CD4-positive, alpha-beta memory T cell (primary cell): ENCODE measurements at regions of chr7 and their contacts with region 1.

Region 1: GRCh38 chr7:46079421-46079820 is 158.3 kb upstream of the IGFBP3 start:
- DNase-seq: no peak
- H3K4me3 ChIP-seq: no peak overlapping the region
- H3K4me3 Mint-ChIP-seq: no peak overlapping the region
- H3K27ac ChIP-seq: no peak overlapping the region
- H3K27ac Mint-ChIP-seq: no peak overlapping the region
- H3K4me1 ChIP-seq: no peaks in the 10 kb centered on the region
- H3K4me1 Mint-ChIP-seq: no peaks in the 10 kb centered on the region
- H3K27me3 ChIP-seq: no peaks in the 10 kb centered on the region
- H3K27me3 Mint-ChIP-seq: no peaks in the 10 kb centered on the region

Region 2: GRCh38 chr7:46054915-46055314 is 24.5 kb before region 1 on chr7:
- CTCF ChIA-PET with region 1: no interaction called
- POLR2A ChIA-PET with region 1: no interaction called
- intact Hi-C with region 1: loop called (anchors 1 kb)
- DNase-seq: no peak
- H3K4me3 ChIP-seq: no peak overlapping the region
- H3K4me3 Mint-ChIP-seq: no peak overlapping the region
- H3K27ac ChIP-seq: no peak overlapping the region
- H3K27ac Mint-ChIP-seq: no peak overlapping the region
- H3K4me1 ChIP-seq: no peaks in the 10 kb centered on the region
- H3K4me1 Mint-ChIP-seq: no peaks in the 10 kb centered on the region
- H3K27me3 ChIP-seq: no peaks in the 10 kb centered on the region
- H3K27me3 Mint-ChIP-seq: no peaks in the 10 kb centered on the region

Region 3: GRCh38 chr7:46534664-46535588 is 455.5 kb after region 1 on chr7:
- CTCF ChIA-PET with region 1: no interaction called
- POLR2A ChIA-PET with region 1: no interaction called
- intact Hi-C with region 1: no loop called
- DNase-seq: no peak
- H3K4me3 ChIP-seq: no peak overlapping the region
- H3K4me3 Mint-ChIP-seq: no peak overlapping the region
- H3K27ac ChIP-seq: no peak overlapping the region
- H3K27ac Mint-ChIP-seq: no peak overlapping the region
- H3K4me1 ChIP-seq: no peaks in the 10 kb centered on the region
- H3K4me1 Mint-ChIP-seq: no peaks in the 10 kb centered on the region
- H3K27me3 ChIP-seq: no peaks in the 10 kb centered on the region
- H3K27me3 Mint-ChIP-seq: no peaks in the 10 kb centered on the region